GM18951 (cell line): ENCODE measurements at regions of chr10 and their contacts with region 1.

Region 1: DNA sequence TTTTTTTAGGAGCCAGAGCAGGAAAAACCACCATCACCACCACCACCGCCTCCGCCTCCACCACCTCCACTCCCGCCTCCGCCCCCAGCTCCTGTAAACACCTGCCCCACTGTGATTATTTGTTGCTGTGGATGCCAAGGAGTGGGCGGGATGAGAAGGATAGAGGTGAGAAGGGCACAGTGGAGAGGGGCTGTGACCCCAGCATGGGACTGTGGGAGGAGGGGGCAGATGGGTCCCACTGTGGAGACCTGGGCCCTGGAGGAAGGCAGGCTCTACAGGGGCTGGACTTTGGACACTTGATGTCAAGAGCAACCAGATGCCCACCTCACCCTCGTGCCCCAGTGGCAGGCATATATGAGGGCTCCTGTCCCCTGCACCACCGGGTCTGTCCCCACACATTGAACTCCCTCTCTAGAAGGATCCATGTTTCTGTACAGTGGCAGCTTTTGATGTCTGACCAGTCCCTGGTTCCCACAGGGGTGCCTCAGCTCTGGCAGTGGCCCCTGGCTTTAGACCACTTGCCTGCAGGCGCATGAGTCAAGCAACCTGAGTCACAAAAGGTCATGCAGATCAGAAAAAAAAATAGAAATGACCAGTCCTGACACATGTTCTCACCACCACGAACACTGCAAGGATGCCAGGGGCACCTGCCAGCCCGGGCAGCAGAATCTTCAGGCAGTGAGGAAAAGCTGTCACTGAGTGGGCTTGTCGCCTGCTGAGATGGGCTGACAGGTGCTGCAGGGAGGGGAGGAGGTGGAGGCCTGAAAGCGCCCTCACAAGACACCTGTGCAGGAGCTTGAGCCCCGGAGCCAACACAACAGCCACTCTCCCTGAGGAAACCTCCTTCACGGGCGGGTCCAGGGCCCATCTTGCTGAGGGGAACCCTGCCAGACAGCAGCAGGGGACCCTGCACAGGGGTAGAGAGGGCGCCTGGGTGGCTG is 25.0 kb downstream of the ANTXRL start:
- POLR2A ChIP-seq: no peak

Region 2: GRCh38 chr10:45646384-45647050 is 665.3 kb before region 1 on chr10:
- in situ Hi-C with region 1: no loop called
- POLR2A ChIP-seq: no peak

Region 3: GRCh38 chr10:46247808-46248569 is 63.8 kb before region 1 on chr10:
- in situ Hi-C with region 1: loop called (anchors 10 kb)
- POLR2A ChIP-seq: no peak

Region 4: DNA sequence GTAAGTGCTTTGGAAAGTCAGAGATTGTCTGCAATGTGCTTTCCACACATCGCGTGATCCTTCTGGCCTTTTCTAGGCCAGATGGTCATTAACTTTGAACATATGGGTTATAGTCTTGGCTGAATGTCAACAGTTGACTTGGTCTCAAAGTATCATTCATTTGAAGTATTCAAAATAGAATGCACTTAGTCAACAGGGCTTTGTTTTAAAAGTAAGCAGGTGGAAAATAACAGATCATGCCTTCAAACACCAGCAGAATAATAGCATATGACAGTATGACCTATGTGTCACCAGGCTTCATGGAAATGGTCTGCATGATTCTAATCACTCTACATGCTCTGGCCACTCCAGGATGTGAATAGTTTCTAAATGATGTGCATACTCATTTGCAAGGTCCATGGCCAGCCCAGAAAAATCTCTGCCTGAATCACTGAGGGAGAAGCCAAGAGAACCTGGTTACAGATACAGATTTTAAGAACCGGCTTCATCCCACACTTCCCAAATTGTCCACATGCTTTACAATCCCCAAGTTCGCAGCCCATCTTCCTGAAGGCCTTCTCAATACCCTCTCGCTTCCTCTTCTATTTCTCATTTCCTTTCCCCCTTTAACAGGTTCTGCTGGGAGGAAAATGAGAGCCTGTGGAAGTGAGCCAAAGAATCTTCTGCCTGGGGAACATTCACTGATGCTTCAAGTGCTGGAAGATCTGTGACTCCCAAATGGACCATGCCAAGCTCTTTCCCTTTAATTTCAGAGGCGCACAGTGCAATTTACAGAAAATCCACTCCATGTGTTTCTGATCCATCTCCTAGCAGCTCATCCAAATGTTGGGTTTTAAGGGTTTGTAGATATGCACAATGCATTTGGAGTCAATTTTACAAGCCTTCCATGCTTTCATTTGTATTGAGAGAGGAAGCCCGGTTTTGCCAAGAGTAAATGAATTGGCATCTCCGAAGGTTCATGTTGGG is 865.4 kb after region 1 on chr10:
- in situ Hi-C with region 1: no loop called
- POLR2A ChIP-seq: no peak